ENCODE measurements at regions of chr12 and their contacts with region 1.

Region 1: DNA sequence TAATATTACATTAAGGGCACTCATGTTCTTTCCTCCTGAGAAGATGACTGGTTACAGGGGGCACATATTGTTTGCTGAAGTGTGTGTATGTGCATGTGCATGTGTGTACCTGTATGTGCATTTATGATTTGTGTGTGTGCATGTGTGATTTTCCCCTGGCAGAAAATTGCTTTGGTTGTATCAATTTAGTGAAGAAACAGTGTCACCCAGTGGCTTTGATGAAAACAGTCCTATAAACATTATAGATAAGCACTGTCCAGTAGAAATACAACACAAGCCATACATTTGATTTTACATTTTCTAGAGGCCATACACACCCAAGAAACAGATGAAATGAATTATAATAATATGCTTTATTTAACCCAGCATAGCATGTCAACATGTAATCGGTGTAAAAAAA is 8.6 kb downstream of the PDE3A start:
- DNase-seq: no peak
- H3K4me3 ChIP-seq: no peak overlapping the region
- H3K27ac ChIP-seq: no peak overlapping the region
- H3K4me1 ChIP-seq: no peaks in the 10 kb centered on the region
- H3K27me3 ChIP-seq: no peaks in the 10 kb centered on the region
- CTCF ChIP-seq: peak; percentile 24 to 42

Region 2: DNA sequence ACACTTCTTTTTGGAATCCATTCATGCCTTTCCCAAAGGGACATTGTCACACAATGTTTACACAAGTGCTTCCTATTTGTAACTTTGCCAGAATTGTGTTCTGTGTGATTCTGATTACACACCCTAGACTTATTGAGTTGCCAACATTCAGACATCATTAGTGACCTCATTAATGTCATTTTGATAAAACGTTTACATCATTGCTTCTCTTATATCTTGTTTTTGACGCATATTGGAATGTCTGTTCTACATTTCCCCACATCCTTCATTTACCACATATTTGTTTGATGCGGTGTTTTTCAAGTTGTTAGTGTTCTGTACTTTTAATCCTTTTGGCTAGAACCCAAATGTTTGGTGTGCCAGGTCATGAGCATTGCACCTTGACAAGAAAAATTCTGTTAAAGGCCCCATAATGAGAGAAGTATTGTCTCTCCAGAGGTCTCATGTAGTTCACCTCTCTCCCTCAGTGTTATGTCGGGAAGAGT is 632.2 kb before region 1 on chr12:
- CTCF ChIA-PET with region 1: no interaction called
- dilution Hi-C with region 1: no loop called
- in situ Hi-C with region 1: no loop called
- intact Hi-C with region 1: loop called (anchors 5 kb)
- DNase-seq: no peak
- H3K4me3 ChIP-seq: no peak overlapping the region
- H3K27ac ChIP-seq: no peak overlapping the region
- H3K4me1 ChIP-seq: no peaks in the 10 kb centered on the region
- H3K27me3 ChIP-seq: peaks cover 4% of the 10 kb centered on the region
- CTCF ChIP-seq: no peak

Region 3: DNA sequence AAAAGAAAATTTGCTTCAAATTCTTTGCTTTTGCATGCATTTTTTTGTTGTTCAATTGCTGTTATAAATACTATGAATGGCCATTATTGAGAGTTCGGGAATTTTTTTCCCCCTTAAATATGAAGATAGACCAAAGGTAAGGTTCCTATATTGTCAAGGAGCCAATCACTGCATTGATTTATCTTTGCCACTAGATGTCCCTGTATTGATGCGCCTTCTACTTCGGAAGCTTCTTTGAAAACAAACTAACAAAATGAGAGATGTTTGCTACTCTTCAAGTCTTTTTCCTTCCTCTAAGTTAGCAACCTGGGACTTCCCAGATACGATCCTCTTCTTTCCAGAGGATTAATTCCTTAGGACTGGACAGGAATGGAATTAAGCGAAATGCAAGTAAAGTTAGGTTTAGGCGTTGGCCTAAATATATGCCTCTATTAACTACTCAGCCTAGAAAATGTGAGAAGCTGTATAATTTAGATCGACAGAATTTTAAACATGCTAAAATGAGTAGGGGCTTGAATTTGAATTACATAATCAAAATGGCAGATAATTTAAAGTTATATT is 619.6 kb before region 1 on chr12:
- CTCF ChIA-PET with region 1: no interaction called
- dilution Hi-C with region 1: no loop called
- in situ Hi-C with region 1: no loop called
- intact Hi-C with region 1: loop called (anchors 5 kb)
- DNase-seq: peak; percentile 19
- H3K4me3 ChIP-seq: no peak overlapping the region
- H3K27ac ChIP-seq: no peak overlapping the region
- H3K4me1 ChIP-seq: peaks cover 9% of the 10 kb centered on the region
- H3K27me3 ChIP-seq: no peaks in the 10 kb centered on the region
- CTCF ChIP-seq: peak; percentile 55 to 77

Measured in mammary epithelial cell (primary cell).